ENCODE measurements at regions of chr13 and their contacts with region 1.

Region 1: GRCh38 chr13:48400850-48401291 is 12.0 kb downstream of the LPAR6 start:
- DNase-seq: peak; percentile 91
- H3K4me3 ChIP-seq: peak overlapping the region in 1 of 3 experiments; percentile 23
- H3K27ac ChIP-seq: peak overlapping the region; percentile 97
- H3K4me1 ChIP-seq: peaks cover 49% of the 10 kb centered on the region
- H3K27me3 ChIP-seq: no peaks in the 10 kb centered on the region
- CTCF ChIP-seq: no peak

Region 2: DNA sequence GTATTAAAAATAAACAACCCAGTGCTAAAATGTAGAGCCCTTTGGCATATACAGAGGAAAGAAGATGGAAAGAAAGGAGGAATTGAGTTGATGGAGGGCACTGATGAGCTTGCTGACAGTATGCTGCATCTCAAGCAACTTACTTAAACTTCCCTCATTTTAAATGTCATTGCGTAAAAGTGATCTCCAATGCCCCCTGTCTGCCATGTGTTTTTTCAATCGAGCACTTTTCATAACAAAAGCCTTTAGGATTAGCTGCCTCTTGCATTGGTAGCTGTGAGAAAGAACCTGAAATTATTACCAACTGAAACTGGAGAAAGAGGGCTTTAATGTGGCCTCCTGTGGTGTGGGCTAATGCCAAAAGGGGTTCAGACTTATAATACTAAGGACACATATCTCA is 941.4 kb before region 1 on chr13:
- CTCF ChIA-PET with region 1: no interaction called
- dilution Hi-C with region 1: no loop called
- in situ Hi-C with region 1: no loop called
- intact Hi-C with region 1: no loop called
- DNase-seq: no peak
- H3K4me3 ChIP-seq: no peak overlapping the region
- H3K27ac ChIP-seq: no peak overlapping the region
- H3K4me1 ChIP-seq: no peaks in the 10 kb centered on the region
- H3K27me3 ChIP-seq: no peaks in the 10 kb centered on the region
- CTCF ChIP-seq: peak in 1 of 2 donors; percentile 14

Region 3: DNA sequence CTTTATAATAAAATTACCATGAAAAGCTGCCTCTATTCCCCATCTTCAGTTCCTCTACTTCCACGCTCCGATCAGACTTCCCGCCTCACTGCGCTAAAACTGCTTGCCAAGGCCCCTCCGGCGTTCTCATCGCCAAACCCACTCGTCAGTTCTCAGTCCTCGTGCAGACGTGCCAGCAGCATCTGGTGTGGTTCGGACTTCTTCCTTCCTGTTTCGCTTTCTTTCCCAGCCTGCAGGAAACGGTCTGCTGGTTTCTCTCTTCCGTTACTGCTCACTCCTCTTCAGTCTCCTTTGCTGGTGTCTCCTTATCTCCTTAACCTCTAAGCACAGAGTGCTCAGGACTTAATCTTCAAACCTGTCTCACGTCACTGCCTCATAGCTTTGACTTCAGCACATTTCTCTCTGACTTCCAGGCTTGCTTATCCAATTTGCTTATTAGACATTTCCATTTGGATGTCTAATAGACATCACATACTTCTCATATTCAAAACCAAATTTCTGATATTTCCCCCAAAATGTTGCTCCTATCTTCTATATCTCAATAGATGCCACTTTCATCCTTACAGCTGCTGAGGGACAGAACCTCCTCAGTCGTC is 91.7 kb after region 1 on chr13:
- CTCF ChIA-PET with region 1: no interaction called
- dilution Hi-C with region 1: loop called (anchors 5 kb)
- in situ Hi-C with region 1: no loop called
- intact Hi-C with region 1: no loop called
- DNase-seq: peak; percentile 57
- H3K4me3 ChIP-seq: peak overlapping the region in 1 of 3 experiments; percentile 12
- H3K27ac ChIP-seq: no peak overlapping the region
- H3K4me1 ChIP-seq: peaks cover 30% of the 10 kb centered on the region
- H3K27me3 ChIP-seq: no peaks in the 10 kb centered on the region
- CTCF ChIP-seq: no peak

Measured in mammary epithelial cell (primary cell).